HepG2 (cell line): ENCODE measurements at regions of chr1 and their contacts with region 1.

Region 1: DNA sequence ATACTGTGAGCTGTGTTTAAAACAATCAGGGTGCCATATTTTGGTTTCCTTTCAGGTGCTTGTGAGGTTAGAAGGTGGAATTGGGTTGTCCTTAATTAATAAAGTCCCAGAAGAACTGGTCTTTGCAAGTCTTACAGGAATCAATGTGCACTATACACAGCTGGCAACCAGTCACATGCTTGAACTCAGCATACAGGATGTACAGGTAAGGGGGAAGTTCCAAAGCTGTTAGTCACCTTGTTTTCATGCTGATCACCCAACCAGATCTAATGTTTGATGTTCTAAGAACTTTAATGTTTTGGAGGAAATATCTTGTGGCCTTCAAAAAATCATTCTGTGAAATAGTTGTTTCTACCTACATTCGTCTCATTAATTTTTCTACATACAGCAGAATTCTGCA is 156.3 kb downstream of the VPS13D start:
- DNase-seq: peak; percentile 47
- ATAC-seq: no peak
- H3K4me3 ChIP-seq: no peak overlapping the region
- H3K27ac ChIP-seq: no peak overlapping the region
- H3K4me1 ChIP-seq: peaks cover 45% of the 10 kb centered on the region
- H3K27me3 ChIP-seq: no peaks in the 10 kb centered on the region
- CTCF ChIP-seq: no peak
- EP300 ChIP-seq: peak in 1 of 2 experiments; percentile 60; a peak in 1 of 4 replicates
- POLR2A ChIP-seq: no peak
- RAD21 ChIP-seq: no peak

Region 2: GRCh38 chr1:12397462-12398450 is 11.6 kb after region 1 on chr1:
- CTCF ChIA-PET with region 1: interaction called, 3 read pairs
- POLR2A ChIA-PET with region 1: interaction called, 126 read pairs
- in situ Hi-C with region 1: no loop called
- intact Hi-C with region 1: loop called (anchors 1 kb)
- DNase-seq: no peak
- ATAC-seq: no peak
- H3K4me3 ChIP-seq: no peak overlapping the region
- H3K27ac ChIP-seq: no peak overlapping the region
- H3K4me1 ChIP-seq: peaks cover 57% of the 10 kb centered on the region
- H3K27me3 ChIP-seq: no peaks in the 10 kb centered on the region
- CTCF ChIP-seq: no peak
- EP300 ChIP-seq: no peak
- POLR2A ChIP-seq: no peak
- RAD21 ChIP-seq: no peak

Region 3: GRCh38 chr1:12424087-12424529 is 38.0 kb after region 1 on chr1:
- CTCF ChIA-PET with region 1: no interaction called
- POLR2A ChIA-PET with region 1: no interaction called
- in situ Hi-C with region 1: no loop called
- intact Hi-C with region 1: no loop called
- DNase-seq: no peak
- ATAC-seq: no peak
- H3K4me3 ChIP-seq: no peak overlapping the region
- H3K27ac ChIP-seq: no peak overlapping the region
- H3K4me1 ChIP-seq: peaks cover 25% of the 10 kb centered on the region
- H3K27me3 ChIP-seq: no peaks in the 10 kb centered on the region
- CTCF ChIP-seq: no peak
- EP300 ChIP-seq: no peak
- POLR2A ChIP-seq: no peak
- RAD21 ChIP-seq: no peak